Activated CD4-positive, alpha-beta memory T cell treated with anti-CD3 and anti-CD28 coated beads for 36 hours (primary cell): ENCODE measurements at regions of chr7 and their contacts with region 1.

Region 1: DNA sequence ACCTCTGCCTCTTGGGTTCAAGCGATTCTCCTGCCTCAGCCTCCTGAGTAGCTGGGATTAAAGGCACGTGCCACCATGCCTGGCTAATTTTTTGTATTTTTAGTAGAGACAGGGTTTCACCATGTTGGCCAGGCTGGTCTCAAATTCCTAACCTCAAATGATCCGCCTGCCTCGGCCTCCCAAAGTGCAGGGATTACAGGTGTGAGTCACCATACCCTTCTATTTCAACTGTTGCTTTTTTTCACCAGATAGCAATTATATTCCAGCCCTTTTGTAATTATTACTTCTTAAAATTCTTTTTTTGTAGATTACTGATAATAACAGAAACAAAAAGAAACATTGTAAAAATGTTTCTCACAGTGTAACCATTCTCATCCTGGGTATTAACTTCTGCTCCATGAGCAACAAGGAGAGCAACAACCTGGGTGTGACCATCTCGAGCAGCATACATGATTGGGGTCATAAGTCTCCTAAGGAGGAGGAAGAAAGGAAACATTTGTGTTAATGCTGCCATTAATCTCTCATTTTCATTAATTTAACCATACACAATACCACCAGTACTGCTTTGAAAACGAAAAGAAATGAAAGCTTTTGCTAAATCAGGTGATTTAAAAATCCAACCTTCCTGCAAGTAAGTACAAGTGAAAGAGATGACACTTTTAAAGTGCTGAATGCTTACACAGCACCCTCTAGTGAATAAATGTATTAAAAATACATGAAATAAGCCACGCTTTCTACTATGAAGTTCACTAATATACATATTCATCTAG is 41.8 kb downstream of the ASZ1 start:
- DNase-seq: no peak
- H3K4me3 Mint-ChIP-seq: no peak overlapping the region
- H3K27ac Mint-ChIP-seq: no peak overlapping the region
- H3K4me1 Mint-ChIP-seq: no peaks in the 10 kb centered on the region
- H3K27me3 Mint-ChIP-seq: no peaks in the 10 kb centered on the region

Region 2: GRCh38 chr7:116772423-116772863 is 613.1 kb before region 1 on chr7:
- CTCF ChIA-PET with region 1: no interaction called
- POLR2A ChIA-PET with region 1: no interaction called
- intact Hi-C with region 1: no loop called
- DNase-seq: no peak
- H3K4me3 Mint-ChIP-seq: no peak overlapping the region
- H3K27ac Mint-ChIP-seq: no peak overlapping the region
- H3K4me1 Mint-ChIP-seq: peaks cover 9% of the 10 kb centered on the region
- H3K27me3 Mint-ChIP-seq: peaks cover 27% of the 10 kb centered on the region

Region 3: GRCh38 chr7:117212969-117213877 is 172.3 kb before region 1 on chr7:
- CTCF ChIA-PET with region 1: no interaction called
- POLR2A ChIA-PET with region 1: no interaction called
- intact Hi-C with region 1: loop called (anchors 2 kb)
- DNase-seq: peak; percentile 59
- H3K4me3 Mint-ChIP-seq: no peak overlapping the region
- H3K27ac Mint-ChIP-seq: no peak overlapping the region
- H3K4me1 Mint-ChIP-seq: no peaks in the 10 kb centered on the region
- H3K27me3 Mint-ChIP-seq: no peaks in the 10 kb centered on the region